ENCODE measurements at regions of chr17 and their contacts with region 1.

Region 1: GRCh38 chr17:1516388-1517161 is at the start of gene INPP5K:
- DNase-seq: peak; percentile 99
- ATAC-seq: peak; percentile 97
- total RNA-seq, gene INPP5K: 29.7 to 30.1 TPM

Region 2: DNA sequence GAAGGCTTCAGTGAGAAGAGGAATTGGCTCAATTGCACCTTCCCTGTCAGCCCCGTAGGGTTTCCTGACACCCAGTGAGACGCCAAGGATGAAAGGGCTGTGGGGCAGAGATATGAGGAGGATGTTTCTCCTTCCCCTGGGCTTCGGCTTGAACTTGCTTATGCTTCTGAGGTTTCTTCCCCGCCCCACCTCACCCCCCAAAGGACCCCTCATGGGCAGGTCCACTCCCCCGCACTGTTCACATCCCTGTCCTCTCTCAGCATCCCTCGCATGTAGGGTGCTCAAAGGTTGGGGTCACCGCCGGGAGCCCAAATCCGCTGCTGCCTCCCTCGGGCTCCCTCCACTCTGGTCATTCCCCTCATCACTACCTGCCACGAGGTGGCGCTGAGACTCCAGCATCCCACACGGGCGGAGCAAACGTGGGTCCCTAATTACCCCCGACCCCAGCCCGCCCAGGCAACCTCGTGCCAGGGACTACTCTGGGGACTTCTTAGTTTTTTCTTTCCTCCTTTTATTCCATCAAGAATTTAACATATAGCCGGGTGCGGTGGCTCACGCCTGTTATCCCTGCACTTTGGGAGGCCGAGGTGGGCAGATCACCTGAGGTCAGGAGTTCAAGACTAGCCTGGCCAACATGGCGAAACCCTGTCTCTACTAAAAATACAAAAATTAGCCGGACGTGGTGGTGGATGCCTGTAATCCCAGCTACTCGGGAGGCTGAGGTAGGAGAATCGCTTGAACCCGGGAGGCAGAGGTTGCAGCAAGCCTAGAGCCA is 240.4 kb before region 1 on chr17:
- intact Hi-C with region 1: loop called in 1 of 2 experiments (anchors 10 kb)
- DNase-seq: peak; percentile 75
- ATAC-seq: peak; percentile 59 to 78

Region 3: DNA sequence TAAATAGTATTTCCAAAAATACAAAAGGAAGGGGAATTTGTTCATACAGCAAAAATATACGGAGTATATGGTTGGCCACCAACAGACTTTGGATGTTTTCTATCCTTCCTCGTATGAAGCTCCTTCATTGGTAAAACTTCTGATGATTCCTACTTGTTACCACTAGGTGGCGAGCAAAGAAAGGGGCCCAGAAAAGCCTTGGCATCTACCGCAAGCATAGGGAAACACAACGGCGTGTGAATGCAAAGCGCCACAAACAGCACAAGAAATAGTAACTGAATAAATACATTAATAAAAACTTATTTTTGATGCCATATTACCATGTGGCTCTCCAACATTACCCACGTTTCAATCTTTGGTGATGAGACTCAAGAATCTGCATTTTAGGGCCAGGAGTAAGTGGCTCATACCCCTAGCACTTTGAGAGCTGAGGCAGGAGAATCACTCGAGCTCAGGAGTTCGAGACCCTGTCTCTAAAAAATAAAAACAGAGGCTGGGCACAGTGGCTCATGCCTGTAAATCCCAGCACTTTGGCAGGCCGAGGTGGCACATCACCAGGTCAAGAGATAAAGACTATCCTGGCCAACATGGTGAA is 151.0 kb before region 1 on chr17:
- intact Hi-C with region 1: loop called (anchors 2 to 10 kb)
- DNase-seq: peak; percentile 42
- ATAC-seq: peak; percentile 75 to 81

Region 4: GRCh38 chr17:1438593-1439083 is 77.9 kb before region 1 on chr17:
- intact Hi-C with region 1: no loop called
- DNase-seq: no peak
- ATAC-seq: peak in 1 of 2 donors; percentile 41

Region 5: GRCh38 chr17:1455797-1456599 is 60.6 kb before region 1 on chr17 and contains the start of gene CRK:
- intact Hi-C with region 1: loop called (anchors 5 to 10 kb)
- DNase-seq: peak; percentile 97
- ATAC-seq: peak; percentile 94 to 97
- total RNA-seq, gene CRK: 37.0 to 44.4 TPM

Region 6: GRCh38 chr17:1480747-1481465 is 35.7 kb before region 1 on chr17:
- intact Hi-C with region 1: no loop called
- DNase-seq: no peak
- ATAC-seq: peak in 1 of 2 donors; percentile 2

Region 7: GRCh38 chr17:1491443-1492248 is 24.9 kb before region 1 on chr17:
- intact Hi-C with region 1: loop called in 1 of 2 experiments (anchors 2 kb)
- DNase-seq: peak; percentile 81
- ATAC-seq: peak; percentile 46 to 64